Psoas muscle (tissue), 8 donors: ENCODE measurements at regions of chr2 and their contacts with region 1.

Region 1: DNA sequence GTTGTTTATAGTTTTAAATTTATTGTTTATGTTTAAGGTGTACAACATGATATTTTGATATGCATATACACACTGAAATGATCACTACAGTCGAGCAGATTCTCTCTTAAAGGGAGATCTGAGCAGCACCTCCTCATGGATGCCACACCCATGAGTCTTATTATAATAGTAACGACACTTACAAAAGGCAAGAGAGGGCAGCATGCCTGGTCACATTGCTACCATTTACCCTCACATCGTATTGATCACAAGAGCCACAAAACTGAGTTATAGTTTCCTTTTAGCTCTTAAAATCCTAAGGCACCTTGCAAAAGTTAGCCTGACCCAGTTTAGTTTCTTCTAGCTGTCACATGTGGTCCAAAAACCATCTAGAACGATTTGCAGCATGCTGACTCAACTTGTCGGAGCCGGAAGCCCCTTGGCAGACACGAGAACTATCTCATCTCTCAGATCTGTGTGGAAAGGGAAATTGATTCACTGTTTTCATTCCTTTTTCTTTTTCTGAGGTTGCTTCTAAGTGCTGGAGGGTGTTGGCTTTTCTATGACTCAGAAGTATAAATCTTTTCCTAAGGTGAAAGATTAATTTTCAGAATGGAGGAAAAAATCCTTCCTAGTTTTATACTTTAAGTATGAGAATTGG is 85.3 kb downstream of the CDC42EP3 start:
- DNase-seq: peak; percentile 52 to 68
- ATAC-seq: no peak
- H3K4me3 ChIP-seq: no peak overlapping the region
- H3K27ac ChIP-seq: peak overlapping the region; percentile 84
- H3K4me1 ChIP-seq: peaks cover 47% of the 10 kb centered on the region
- H3K27me3 ChIP-seq: no peaks in the 10 kb centered on the region
- CTCF ChIP-seq: no peak

Region 2: GRCh38 chr2:37506407-37507050 is 79.6 kb before region 1 on chr2:
- intact Hi-C with region 1: loop called in 1 of 2 experiments (anchors 5 kb)
- DNase-seq: no peak
- ATAC-seq: peak; percentile 84 to 92 (median 88)
- H3K4me3 ChIP-seq: peak overlapping the region; percentile 1
- H3K27ac ChIP-seq: peak overlapping the region; percentile 77
- H3K4me1 ChIP-seq: peaks cover 20% of the 10 kb centered on the region
- H3K27me3 ChIP-seq: no peaks in the 10 kb centered on the region
- CTCF ChIP-seq: no peak

Region 3: DNA sequence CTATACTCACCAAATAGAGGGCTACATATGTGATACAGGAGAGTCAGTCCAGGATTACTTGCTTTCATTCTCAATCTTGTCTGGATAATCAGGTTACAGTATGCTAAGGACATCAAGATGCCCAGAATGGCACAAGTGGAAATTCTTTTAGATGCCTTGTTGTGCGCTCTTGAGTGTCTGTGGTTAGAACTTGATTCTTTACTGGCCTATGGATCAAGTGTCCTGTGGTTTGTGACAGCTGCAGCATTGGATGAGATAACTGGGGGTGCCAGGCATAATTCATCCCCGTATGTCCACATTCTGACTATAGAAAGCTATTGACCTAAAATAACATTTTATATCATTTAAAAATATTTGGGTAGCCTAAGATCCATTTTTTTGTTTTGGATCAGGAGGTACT is 45.2 kb after region 1 on chr2:
- intact Hi-C with region 1: loop called in 1 of 2 experiments (anchors 1 kb)
- DNase-seq: no peak
- ATAC-seq: peak; percentile 84 to 92 (median 90)
- H3K4me3 ChIP-seq: peak overlapping the region; percentile 31
- H3K27ac ChIP-seq: peak overlapping the region; percentile 74
- H3K4me1 ChIP-seq: peaks cover 40% of the 10 kb centered on the region
- H3K27me3 ChIP-seq: no peaks in the 10 kb centered on the region
- CTCF ChIP-seq: no peak

Region 4: DNA sequence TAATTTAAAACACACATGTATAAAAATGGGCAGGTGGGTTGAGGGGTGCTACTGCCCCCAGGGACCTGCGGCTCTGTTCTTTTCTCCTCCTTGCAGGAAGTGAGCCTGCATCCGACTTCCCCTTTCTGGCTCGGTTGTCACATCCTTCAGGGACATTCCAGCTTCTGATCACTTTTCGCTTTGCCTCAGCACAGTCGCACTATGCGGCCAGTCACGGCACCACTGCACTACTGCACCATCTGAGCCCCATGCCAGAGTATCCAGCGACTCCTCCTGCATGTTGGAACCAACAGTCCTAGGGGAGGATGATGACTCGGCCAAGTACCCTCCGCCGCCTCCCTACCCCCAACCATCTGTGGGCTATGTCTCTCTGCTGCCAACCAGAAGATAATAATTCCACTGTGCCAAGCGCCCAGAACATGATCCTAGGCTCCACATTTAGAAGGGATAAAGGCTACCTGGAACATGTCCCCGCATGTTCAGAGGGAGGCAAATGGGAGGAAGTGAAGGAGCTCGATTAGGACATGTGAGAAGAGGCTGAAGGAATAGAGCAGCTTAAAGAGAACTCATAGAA is 67.8 kb after region 1 on chr2:
- intact Hi-C with region 1: loop called in 1 of 2 experiments (anchors 5 kb)
- DNase-seq: peak; percentile 73 to 92
- ATAC-seq: peak; percentile 80 to 93 (median 90)
- H3K4me3 ChIP-seq: peak overlapping the region; percentile 50
- H3K27ac ChIP-seq: peak overlapping the region; percentile 90
- H3K4me1 ChIP-seq: peaks cover 85% of the 10 kb centered on the region
- H3K27me3 ChIP-seq: no peaks in the 10 kb centered on the region
- CTCF ChIP-seq: no peak